Activated CD4-positive, alpha-beta memory T cell treated with anti-CD3 and anti-CD28 coated beads for 36 hours (primary cell): ENCODE measurements at regions of chr2 and their contacts with region 1.

Region 1: GRCh38 chr2:177164584-177165052 is 48.0 kb upstream of the HNRNPA3 start:
- DNase-seq: peak; percentile 86
- H3K4me3 Mint-ChIP-seq: no peak overlapping the region
- H3K27ac Mint-ChIP-seq: no peak overlapping the region
- H3K4me1 Mint-ChIP-seq: peaks cover 16% of the 10 kb centered on the region
- H3K27me3 Mint-ChIP-seq: no peaks in the 10 kb centered on the region

Region 2: GRCh38 chr2:177021706-177022343 is 142.8 kb before region 1 on chr2:
- CTCF ChIA-PET with region 1: no interaction called
- POLR2A ChIA-PET with region 1: no interaction called
- intact Hi-C with region 1: no loop called
- DNase-seq: no peak
- H3K4me3 Mint-ChIP-seq: no peak overlapping the region
- H3K27ac Mint-ChIP-seq: no peak overlapping the region
- H3K4me1 Mint-ChIP-seq: no peaks in the 10 kb centered on the region
- H3K27me3 Mint-ChIP-seq: peaks cover 9% of the 10 kb centered on the region

Region 3: GRCh38 chr2:177148477-177149154 is 16.0 kb before region 1 on chr2:
- CTCF ChIA-PET with region 1: interaction called, 68 read pairs
- POLR2A ChIA-PET with region 1: interaction called, 3 read pairs
- intact Hi-C with region 1: no loop called
- DNase-seq: peak; percentile 81
- H3K4me3 Mint-ChIP-seq: peak overlapping the region; percentile 78
- H3K27ac Mint-ChIP-seq: no peak overlapping the region
- H3K4me1 Mint-ChIP-seq: peaks cover 12% of the 10 kb centered on the region
- H3K27me3 Mint-ChIP-seq: peaks cover 20% of the 10 kb centered on the region

Region 4: GRCh38 chr2:177212106-177212890 is 47.7 kb after region 1 on chr2 and contains the start of gene HNRNPA3:
- CTCF ChIA-PET with region 1: interaction called, 15 read pairs
- POLR2A ChIA-PET with region 1: interaction called, 10 read pairs
- intact Hi-C with region 1: loop called (anchors 1 kb)
- DNase-seq: peak; percentile 100
- H3K4me3 Mint-ChIP-seq: peak within 1 kb of the TSS; percentile 97
- H3K27ac Mint-ChIP-seq: peak within 1 kb of the TSS; percentile 100
- H3K4me1 Mint-ChIP-seq: peaks cover 35% of the 10 kb centered on the region
- H3K27me3 Mint-ChIP-seq: no peaks in the 10 kb centered on the region
- total RNA-seq, gene HNRNPA3: 303 to 311 TPM

Region 5: DNA sequence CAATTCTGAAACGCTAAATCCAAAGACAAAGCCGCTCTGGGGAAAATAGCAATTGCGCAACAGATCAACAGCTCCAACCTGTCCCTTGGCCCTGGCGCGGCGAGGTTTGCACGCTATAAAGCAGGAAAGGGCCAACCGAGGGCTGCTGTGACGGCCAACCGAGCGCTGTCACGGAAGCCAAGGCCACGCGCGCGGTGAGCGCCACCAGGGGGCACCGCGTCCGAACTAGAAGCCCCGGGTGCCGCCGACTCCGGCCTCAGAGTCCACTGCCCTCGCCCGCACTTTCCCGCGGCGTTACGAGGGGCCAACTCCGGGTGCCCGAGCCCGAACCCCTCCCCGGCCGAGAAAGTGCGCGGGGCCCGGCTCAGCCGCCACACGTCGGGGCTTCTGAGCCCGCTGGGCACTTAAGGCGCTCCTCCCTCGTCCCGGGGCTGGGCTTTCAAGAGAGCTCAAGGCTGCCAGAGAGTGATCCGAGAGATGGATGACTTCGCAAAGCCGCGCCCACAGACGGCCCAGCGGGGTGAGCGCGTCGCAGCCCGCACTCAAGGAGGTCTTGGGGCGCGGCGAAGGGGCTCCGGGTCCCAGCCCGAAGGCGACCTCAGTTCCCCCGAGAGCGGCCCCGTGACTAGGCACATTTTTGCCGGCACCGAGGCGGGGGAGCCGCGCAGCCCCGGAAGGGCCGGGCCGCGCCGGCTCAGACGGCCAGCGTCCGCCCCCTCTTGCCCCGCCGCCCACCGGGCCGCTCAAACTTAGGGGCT is 99.0 kb after region 1 on chr2:
- CTCF ChIA-PET with region 1: interaction called, 65 read pairs
- POLR2A ChIA-PET with region 1: interaction called, 17 read pairs
- intact Hi-C with region 1: loop called (anchors 1 kb)
- DNase-seq: peak; percentile 96
- H3K4me3 Mint-ChIP-seq: peak overlapping the region; percentile 86
- H3K27ac Mint-ChIP-seq: peak overlapping the region; percentile 99
- H3K4me1 Mint-ChIP-seq: peaks cover 52% of the 10 kb centered on the region
- H3K27me3 Mint-ChIP-seq: no peaks in the 10 kb centered on the region

Region 6: GRCh38 chr2:177332041-177332991 is 167.7 kb after region 1 on chr2:
- CTCF ChIA-PET with region 1: interaction called, 111 read pairs
- POLR2A ChIA-PET with region 1: interaction called, 5 read pairs
- intact Hi-C with region 1: loop called (anchors 1 kb)
- DNase-seq: peak; percentile 37
- H3K4me3 Mint-ChIP-seq: no peak overlapping the region
- H3K27ac Mint-ChIP-seq: no peak overlapping the region
- H3K4me1 Mint-ChIP-seq: peaks cover 5% of the 10 kb centered on the region
- H3K27me3 Mint-ChIP-seq: no peaks in the 10 kb centered on the region

Region 7: GRCh38 chr2:177552422-177553175 is 388.0 kb after region 1 on chr2:
- CTCF ChIA-PET with region 1: no interaction called
- POLR2A ChIA-PET with region 1: no interaction called
- intact Hi-C with region 1: loop called (anchors 10 kb)
- DNase-seq: peak; percentile 93
- H3K4me3 Mint-ChIP-seq: peak overlapping the region; percentile 97
- H3K27ac Mint-ChIP-seq: peak overlapping the region; percentile 100
- H3K4me1 Mint-ChIP-seq: peaks cover 8% of the 10 kb centered on the region
- H3K27me3 Mint-ChIP-seq: no peaks in the 10 kb centered on the region

Region 8: GRCh38 chr2:177763532-177764265 is 599.1 kb after region 1 on chr2:
- CTCF ChIA-PET with region 1: interaction called, 6 read pairs
- POLR2A ChIA-PET with region 1: no interaction called
- intact Hi-C with region 1: loop called (anchors 2 kb)
- DNase-seq: peak; percentile 83
- H3K4me3 Mint-ChIP-seq: no peak overlapping the region
- H3K27ac Mint-ChIP-seq: no peak overlapping the region
- H3K4me1 Mint-ChIP-seq: peaks cover 3% of the 10 kb centered on the region
- H3K27me3 Mint-ChIP-seq: peaks cover 11% of the 10 kb centered on the region